Natural killer cell (primary cell): ENCODE measurements at regions of chr2 and their contacts with region 1.

Region 1: DNA sequence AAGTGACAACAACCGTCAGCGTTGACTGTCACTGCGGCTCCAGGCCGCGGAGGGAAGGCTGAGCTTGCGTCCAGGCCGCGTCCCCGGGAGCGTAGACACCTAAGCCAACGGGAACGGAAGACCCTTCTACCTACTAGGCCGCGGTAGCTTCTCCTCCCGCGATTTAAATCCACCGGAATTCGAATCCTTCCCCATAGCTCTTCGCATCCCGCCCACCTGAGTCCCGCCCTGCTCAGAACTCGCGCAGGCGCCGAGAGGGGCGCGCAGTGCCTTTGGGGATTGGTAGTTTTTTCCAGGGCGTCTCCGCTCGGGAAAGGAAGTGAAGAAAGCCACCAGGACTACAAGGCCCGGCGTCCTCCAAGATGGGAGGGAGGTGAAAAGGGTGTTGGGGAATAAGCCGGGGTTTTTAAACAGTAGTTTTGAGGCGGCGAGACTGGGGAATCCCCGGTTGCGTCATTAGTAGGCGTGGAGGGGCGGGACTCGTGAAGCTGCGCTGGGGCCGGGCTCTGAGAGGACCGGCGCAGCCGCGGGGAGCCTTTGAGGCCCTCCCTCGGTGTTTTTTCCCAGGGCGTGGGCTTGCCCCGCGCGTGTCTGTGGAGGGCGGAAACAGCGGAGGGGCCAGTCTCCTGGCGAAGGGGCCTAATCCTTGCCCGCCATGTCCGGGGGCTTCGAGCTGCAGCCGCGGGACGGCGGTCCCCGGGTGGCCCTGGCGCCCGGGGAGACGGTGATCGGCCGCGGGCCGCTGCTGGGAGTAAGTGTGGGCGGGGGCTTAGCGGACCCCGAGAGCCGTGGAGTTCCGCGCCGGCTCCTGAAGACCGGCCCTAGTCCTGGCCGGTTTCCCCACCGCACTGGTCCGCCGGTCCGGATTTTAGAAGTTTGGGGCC is at the starts of genes APLF and FBXO48:
- DNase-seq: peak; percentile 98 to 99
- ATAC-seq: peak; percentile 87 to 96 (median 89)
- H3K4me3 ChIP-seq: peak within 1 kb of the TSS; percentile 79
- H3K4me3 Mint-ChIP-seq: peak within 1 kb of the TSS; percentile 96
- H3K27ac ChIP-seq: peak within 1 kb of the TSS; percentile 74
- H3K27ac Mint-ChIP-seq: peak within 1 kb of the TSS; percentile 96 to 97
- H3K4me1 ChIP-seq: peaks cover 16% of the 10 kb centered on the region
- H3K4me1 Mint-ChIP-seq: peaks cover 12 to 25% of the 10 kb centered on the region in 2 donors
- H3K27me3 ChIP-seq: no peaks in the 10 kb centered on the region
- H3K27me3 Mint-ChIP-seq: peaks cover 4 to 17% of the 10 kb centered on the region in 2 donors
- CTCF ChIP-seq: no peak
- total RNA-seq, gene APLF: 2.2 to 4.3 (median 3.8) TPM
- total RNA-seq, gene FBXO48: 0.96 to 1.3 (median 1.1) TPM

Region 2: DNA sequence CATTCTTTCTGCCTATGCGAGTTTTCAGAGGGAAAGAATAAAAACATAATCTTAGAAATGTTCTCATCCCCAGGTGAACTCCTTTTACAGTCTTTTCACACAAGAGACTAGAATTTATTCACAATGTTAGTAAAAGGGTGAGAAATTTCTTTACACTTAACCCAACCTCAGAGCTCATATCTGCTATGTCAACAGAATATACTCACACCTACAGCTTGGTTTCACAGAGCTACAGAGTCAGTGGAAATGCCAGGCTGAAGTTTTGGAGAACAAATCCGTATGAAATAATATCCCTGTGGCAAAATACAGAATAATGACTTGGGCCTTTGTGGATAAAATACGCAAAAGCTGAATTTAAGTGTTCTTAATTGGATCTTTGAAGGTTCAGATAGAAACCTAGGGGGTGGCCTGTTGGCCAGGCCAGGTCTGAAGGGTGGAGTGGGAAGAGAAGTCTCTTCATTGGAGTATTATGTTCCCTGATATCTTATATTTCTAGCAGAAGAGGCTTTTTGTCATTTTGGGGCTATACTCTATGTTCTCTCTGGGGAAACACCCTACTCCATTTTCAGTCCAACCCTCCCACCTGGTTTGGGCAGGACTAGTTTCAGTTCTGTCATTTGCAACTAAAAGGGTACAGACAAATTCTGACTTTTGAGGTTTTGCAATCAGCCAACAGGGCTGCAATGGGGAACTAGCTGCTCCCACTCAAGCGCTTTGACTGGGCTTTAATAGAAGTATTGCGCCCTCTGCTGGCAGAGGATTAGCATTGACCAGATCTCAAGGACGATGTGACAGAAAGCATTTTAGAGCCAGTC is 25.9 kb before region 1 on chr2:
- intact Hi-C with region 1: loop called (anchors 1 kb)
- DNase-seq: peak; percentile 71 to 94
- ATAC-seq: peak; percentile 80 to 96 (median 86)
- H3K4me3 ChIP-seq: no peak overlapping the region
- H3K4me3 Mint-ChIP-seq: peak overlapping the region; percentile 85
- H3K27ac ChIP-seq: peak overlapping the region; percentile 95
- H3K27ac Mint-ChIP-seq: peak overlapping the region; percentile 97 to 99
- H3K4me1 ChIP-seq: peaks cover 24% of the 10 kb centered on the region
- H3K4me1 Mint-ChIP-seq: peaks cover 42 to 43% of the 10 kb centered on the region in 2 donors
- H3K27me3 ChIP-seq: no peaks in the 10 kb centered on the region
- H3K27me3 Mint-ChIP-seq: no peaks in the 10 kb centered on the region
- CTCF ChIP-seq: peak; percentile 93

Region 3: DNA sequence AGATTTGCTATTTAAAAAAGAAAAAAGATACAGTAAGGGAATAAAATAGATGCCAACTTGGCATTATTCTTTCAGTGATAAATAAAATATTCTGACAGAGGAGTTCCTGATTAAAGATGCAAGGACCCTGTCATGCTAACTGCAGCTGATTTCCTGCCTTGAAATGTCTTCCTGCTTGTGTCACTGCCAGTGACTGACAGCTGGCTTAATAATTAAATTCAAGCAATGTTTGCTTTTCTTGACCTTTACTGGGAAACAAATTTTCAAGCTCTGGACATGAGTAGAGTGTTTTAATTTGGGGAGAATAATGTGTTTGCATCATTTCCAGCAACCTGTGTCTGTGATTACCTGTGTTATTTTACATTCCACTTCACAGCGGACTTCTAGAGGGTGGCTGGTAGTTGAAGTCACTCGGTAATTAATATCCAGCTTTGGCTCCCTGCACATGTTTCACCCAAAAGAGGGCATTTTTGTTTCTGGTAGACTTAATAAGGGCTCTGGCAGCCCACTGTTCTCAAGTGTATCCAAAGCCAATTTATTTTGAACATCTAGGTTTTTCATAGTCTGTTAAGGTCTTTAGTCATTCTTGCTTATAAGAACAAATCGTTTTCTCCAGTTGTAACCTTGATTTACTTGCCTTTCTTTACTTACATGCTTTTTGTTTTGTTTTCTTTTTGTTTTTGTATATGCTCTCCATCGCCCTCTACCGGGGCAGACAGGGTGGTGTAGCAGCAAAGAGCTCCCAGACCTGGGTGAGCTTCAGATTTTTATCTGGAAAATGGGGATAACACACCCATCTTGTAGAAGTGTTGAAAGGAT is 127.6 kb after region 1 on chr2:
- intact Hi-C with region 1: loop called (anchors 1 kb)
- DNase-seq: peak; percentile 36 to 79
- ATAC-seq: peak; percentile 75 to 83 (median 81)
- H3K4me3 ChIP-seq: no peak overlapping the region
- H3K4me3 Mint-ChIP-seq: peak overlapping the region; percentile 52
- H3K27ac ChIP-seq: no peak overlapping the region
- H3K27ac Mint-ChIP-seq: peak overlapping the region; percentile 35 to 43
- H3K4me1 ChIP-seq: no peaks in the 10 kb centered on the region
- H3K4me1 Mint-ChIP-seq: peaks cover 6 to 13% of the 10 kb centered on the region in 2 donors
- H3K27me3 ChIP-seq: no peaks in the 10 kb centered on the region
- H3K27me3 Mint-ChIP-seq: peaks cover 0 to 9% of the 10 kb centered on the region in 2 donors
- CTCF ChIP-seq: peak; percentile 91

Region 4: DNA sequence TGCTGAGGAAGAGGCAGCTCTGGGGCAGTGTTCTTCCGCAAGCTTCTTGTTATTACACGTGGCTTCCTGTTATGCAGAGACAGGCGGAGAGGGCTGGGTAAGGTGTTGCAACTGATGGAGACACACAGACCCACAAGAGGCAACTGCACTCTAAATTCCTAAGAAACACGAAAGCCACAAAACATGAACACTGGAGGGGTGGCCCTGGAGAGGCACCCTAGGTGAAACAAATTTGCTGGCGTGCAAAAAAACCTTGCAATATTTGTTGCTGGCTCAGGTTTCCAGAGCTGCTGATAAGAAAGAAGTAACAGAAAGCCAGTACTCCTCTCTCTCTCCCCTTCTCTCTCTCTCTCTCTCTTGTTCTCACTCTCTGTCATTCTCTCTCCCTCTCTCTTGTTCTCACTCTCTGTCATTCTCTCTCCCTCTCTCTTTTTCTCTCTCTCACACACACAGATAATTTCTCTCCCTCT is 299.1 kb after region 1 on chr2:
- intact Hi-C with region 1: loop called (anchors 1 kb)
- DNase-seq: peak; percentile 66 to 88
- ATAC-seq: peak; percentile 56 to 84 (median 76)
- H3K4me3 ChIP-seq: peak overlapping the region; percentile 6
- H3K4me3 Mint-ChIP-seq: peak overlapping the region; percentile 81
- H3K27ac ChIP-seq: peak overlapping the region; percentile 96
- H3K27ac Mint-ChIP-seq: peak overlapping the region in 1 of 2 donors; percentile 93
- H3K4me1 ChIP-seq: peaks cover 79% of the 10 kb centered on the region
- H3K4me1 Mint-ChIP-seq: peaks cover 92 to 98% of the 10 kb centered on the region in 2 donors
- H3K27me3 ChIP-seq: no peaks in the 10 kb centered on the region
- H3K27me3 Mint-ChIP-seq: peaks cover 0 to 4% of the 10 kb centered on the region in 2 donors
- CTCF ChIP-seq: no peak

Region 5: DNA sequence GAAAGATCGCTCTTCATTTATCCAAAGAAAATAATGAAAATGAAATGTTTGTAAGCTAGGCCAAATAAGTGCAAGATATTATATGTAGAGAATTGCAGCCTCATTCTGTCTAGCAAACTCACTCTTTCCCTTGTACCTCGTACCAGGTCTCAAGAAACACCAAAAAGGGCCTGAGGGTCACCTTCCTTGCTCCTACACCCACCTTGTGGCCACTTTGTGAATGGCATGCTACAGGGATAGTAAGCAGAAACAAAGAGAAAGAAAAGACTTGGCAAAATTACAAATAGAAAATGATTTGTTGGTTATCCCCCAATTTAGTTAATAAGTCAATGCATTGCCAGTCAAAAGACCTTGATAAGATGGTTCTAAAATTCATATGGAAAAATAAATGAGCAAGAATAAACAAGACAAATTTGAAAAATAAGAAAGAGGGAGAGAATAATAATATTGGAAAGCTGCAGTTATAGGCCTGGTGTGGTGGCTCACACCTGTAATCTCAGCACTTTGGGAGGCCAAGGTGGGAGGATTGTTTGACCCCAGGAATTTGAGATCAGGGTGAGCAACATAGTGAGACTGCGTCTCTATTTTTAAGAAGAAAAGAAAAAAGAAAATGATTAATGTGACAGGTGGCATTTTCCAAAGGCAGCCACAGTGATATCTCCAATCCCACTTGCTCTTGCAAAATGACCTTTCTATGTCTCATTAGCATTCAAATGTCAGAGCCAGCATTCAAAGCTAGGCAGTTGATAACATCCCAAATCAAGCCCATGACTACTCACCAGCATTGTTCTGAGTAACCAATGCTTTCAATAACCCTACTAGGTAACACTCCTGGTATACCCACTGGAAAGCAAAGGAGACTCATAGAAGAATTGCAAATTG is 442.7 kb after region 1 on chr2:
- intact Hi-C with region 1: loop called (anchors 5 kb)
- DNase-seq: peak; percentile 47 to 85
- ATAC-seq: peak; percentile 38 to 55 (median 43)
- H3K4me3 ChIP-seq: no peak overlapping the region
- H3K4me3 Mint-ChIP-seq: peak overlapping the region; percentile 59
- H3K27ac ChIP-seq: no peak overlapping the region
- H3K27ac Mint-ChIP-seq: peak overlapping the region; percentile 1 to 3
- H3K4me1 ChIP-seq: peaks cover 43% of the 10 kb centered on the region
- H3K4me1 Mint-ChIP-seq: peaks cover 25% of the 10 kb centered on the region in 2 donors
- H3K27me3 ChIP-seq: no peaks in the 10 kb centered on the region
- H3K27me3 Mint-ChIP-seq: no peaks in the 10 kb centered on the region
- CTCF ChIP-seq: peak; percentile 88

Region 6: GRCh38 chr2:69535817-69536241 is 1068.5 kb after region 1 on chr2:
- intact Hi-C with region 1: no loop called
- DNase-seq: no peak
- ATAC-seq: peak in 1 of 3 donors; percentile 35
- H3K4me3 ChIP-seq: no peak overlapping the region
- H3K4me3 Mint-ChIP-seq: peak overlapping the region; percentile 7
- H3K27ac ChIP-seq: no peak overlapping the region
- H3K27ac Mint-ChIP-seq: peak overlapping the region; percentile 73 to 82
- H3K4me1 ChIP-seq: peaks cover 18% of the 10 kb centered on the region
- H3K4me1 Mint-ChIP-seq: peaks cover 33 to 55% of the 10 kb centered on the region in 2 donors
- H3K27me3 ChIP-seq: no peaks in the 10 kb centered on the region
- H3K27me3 Mint-ChIP-seq: no peaks in the 10 kb centered on the region
- CTCF ChIP-seq: no peak